Colonic mucosa (tissue), 4 donors: ENCODE measurements at regions of chr14 and their contacts with region 1.

Region 1: GRCh38 chr14:69726761-69727511 is 40.0 kb upstream of the SRSF5 start:
- DNase-seq: peak; percentile 86
- H3K4me3 ChIP-seq: peak overlapping the region; percentile 37
- H3K27ac ChIP-seq: no peak overlapping the region
- H3K4me1 ChIP-seq: peaks cover 3% of the 10 kb centered on the region
- H3K27me3 ChIP-seq: no peaks in the 10 kb centered on the region
- CTCF ChIP-seq: peak; percentile 96

Region 2: DNA sequence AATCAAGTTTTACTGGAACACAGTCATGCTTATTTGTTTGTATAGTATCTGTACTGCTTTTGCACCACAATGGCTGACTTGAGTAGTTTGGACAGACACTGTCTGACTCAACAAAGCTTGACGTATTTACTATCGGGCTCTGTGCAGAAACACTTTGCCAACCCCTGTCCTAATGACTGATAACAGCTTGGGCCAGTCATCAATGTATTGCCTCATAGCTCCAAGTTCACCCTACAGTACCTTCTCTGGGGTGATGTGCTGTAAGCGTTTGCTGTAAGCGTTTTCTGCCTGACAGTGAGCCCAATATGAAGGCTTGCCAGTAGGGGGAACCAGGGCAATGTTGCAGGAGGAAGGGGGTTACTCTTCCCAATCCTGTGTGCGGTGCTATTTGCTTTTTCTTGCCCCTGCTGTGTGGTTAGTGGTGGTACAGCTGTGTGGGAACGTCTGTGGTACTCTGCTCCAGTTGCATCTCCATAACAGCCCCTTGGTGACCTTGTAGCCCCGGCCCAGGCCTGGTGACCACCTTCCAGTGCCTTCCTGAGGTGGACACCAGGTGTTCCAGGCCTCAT is 146.8 kb before region 1 on chr14:
- intact Hi-C with region 1: loop called (anchors 2 kb)
- DNase-seq: no peak
- H3K4me3 ChIP-seq: no peak overlapping the region
- H3K27ac ChIP-seq: no peak overlapping the region
- H3K4me1 ChIP-seq: no peaks in the 10 kb centered on the region
- H3K27me3 ChIP-seq: peaks cover 13% of the 10 kb centered on the region
- CTCF ChIP-seq: no peak

Region 3: GRCh38 chr14:69606258-69607184 is 120.4 kb before region 1 on chr14:
- intact Hi-C with region 1: loop called (anchors 2 kb)
- DNase-seq: peak; percentile 70
- H3K4me3 ChIP-seq: no peak overlapping the region
- H3K27ac ChIP-seq: peak overlapping the region; percentile 62
- H3K4me1 ChIP-seq: peaks cover 3% of the 10 kb centered on the region
- H3K27me3 ChIP-seq: no peaks in the 10 kb centered on the region
- CTCF ChIP-seq: no peak